ENCODE measurements at regions of chr2 and their contacts with region 1.

Region 1: GRCh38 chr2:43685357-43685756 is 9.1 kb upstream of the C1GALT1C1L start:
- DNase-seq: no peak

Region 2: GRCh38 chr2:43576981-43577892 is 108.1 kb before region 1 on chr2:
- CTCF ChIA-PET with region 1: no interaction called
- POLR2A ChIA-PET with region 1: no interaction called
- DNase-seq: peak; percentile 41

Region 3: DNA sequence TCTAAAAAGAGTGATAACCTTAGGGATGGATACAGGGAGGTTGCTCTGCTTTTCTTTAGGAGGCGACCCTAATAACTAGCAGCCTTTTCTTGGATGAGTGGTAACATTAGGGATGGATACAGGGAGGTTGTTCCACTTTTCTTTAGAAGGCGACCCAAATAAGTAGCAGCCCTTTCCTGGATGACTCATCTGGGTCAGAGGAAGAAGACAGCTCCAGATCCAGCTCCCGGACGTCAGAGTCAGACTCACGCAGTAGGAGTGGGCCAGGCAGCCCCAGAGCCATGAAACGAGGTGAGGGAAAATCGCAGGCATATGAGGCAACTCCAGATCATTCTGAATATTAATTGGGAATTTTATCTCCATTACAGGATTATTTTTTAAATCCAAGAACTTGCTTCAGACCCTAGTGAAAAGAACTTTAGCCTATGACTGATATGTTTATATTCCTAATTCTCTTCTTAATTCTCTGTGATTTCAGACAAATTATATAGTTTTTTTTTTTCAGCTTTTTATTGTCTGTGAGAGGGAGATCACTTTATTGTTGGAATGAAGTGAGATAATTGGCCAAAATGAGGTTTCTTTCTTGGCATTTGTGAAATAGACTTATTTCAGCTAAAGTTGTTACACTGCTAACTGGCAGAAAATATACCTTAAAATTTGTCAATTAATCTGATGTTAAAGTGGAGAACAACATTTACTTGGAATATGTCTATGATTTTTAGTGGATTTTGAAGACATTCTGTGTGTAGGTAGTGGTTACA is 22.1 kb after region 1 on chr2:
- CTCF ChIA-PET with region 1: interaction called, 12 read pairs
- POLR2A ChIA-PET with region 1: no interaction called
- DNase-seq: no peak